Left cardiac atrium (tissue), 4 donors: ENCODE measurements at regions of chr10 and their contacts with region 1.

Region 1: DNA sequence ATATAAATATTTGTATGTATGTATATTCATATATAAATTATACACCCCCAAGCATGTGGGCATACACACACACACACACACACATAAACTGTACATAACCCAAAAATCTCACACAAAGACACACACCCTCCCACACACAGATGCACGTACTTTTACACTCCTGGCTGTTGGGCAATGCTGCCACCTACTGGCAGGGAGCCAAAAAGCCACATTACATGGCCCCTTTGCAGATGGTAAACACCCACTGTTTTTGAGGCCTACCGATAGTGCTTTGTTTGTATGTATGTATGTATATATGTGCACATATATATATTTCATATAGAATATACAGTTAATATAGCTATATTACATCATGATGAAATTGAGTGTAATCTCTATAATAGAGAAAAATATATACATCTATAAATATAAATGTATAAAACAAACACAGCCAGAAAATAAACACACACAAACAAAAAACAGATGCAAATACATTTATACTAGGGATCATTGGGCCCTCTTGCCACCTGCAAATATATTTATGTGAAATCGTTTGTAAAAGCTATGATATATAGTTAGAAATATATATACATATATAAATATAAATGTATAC is 120.1 kb upstream of the ACBD5 start:
- DNase-seq: peak; percentile 71
- ATAC-seq: peak; percentile 78 to 82

Region 2: DNA sequence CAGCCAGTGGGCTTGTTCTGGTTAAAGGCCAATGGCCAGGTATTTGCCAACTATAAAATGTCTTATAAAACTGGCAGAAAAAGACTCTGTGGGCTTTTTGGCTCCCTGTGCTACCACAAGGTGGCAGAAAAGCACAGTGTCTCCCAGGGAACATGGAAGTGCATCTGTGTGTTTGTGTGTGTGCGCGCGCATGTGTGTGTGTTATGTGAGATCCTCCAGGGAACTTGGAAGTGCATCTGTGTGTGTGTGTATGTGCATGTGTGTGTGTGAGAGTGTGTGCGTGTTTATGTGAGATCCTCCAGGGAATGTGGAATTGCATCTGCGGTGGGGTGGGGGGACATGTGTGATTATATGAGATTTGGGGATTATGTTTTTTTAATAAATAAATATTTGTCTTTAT is 469.7 kb before region 1 on chr10:
- intact Hi-C with region 1: loop called in 1 of 2 experiments (anchors 5 kb)
- DNase-seq: peak; percentile 31
- ATAC-seq: no peak

Region 3: GRCh38 chr10:27223964-27224363 is 136.7 kb before region 1 on chr10:
- intact Hi-C with region 1: loop called in 1 of 2 experiments (anchors 5 kb)
- DNase-seq: peak; percentile 41
- ATAC-seq: no peak

Region 4: GRCh38 chr10:27285108-27285507 is 75.6 kb before region 1 on chr10:
- intact Hi-C with region 1: loop called in 1 of 2 experiments (anchors 5 kb)
- DNase-seq: no peak
- ATAC-seq: no peak

Region 5: GRCh38 chr10:27581225-27581624 is 220.5 kb after region 1 on chr10:
- intact Hi-C with region 1: no loop called
- DNase-seq: no peak
- ATAC-seq: no peak